Astrocyte of the cerebellum (primary cell): ENCODE measurements at regions of chr3 and their contacts with region 1.

Region 1: GRCh38 chr3:81434161-81434560 is 327.3 kb downstream of the GBE1 start:
- DNase-seq: no peak
- H3K4me3 ChIP-seq: no peak overlapping the region
- CTCF ChIP-seq: no peak

Region 2: DNA sequence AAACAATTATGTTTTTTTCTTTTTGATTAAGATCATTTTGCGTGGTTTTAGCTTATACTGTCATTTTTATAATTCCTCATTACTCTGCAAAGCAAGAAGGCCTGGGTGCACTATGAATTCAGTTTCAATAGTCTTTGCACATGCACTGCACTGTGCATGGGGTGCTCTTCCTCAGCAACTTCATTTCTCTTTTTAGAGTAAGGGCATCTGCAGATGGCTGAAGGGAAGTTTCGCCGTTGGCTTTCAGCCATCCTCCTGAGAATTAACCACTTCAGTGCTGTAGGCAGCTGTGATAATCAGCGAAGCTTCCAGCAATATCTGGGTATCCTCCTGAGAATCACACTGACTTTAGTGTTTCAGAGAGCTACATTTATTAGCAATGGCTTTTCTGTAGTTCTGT is 42.5 kb after region 1 on chr3:
- in situ Hi-C with region 1: loop called (anchors 5 kb)
- DNase-seq: no peak
- H3K4me3 ChIP-seq: no peak overlapping the region
- CTCF ChIP-seq: no peak